Heart left ventricle (tissue), 16 donors: ENCODE measurements at regions of chr13 and their contacts with region 1.

Region 1: DNA sequence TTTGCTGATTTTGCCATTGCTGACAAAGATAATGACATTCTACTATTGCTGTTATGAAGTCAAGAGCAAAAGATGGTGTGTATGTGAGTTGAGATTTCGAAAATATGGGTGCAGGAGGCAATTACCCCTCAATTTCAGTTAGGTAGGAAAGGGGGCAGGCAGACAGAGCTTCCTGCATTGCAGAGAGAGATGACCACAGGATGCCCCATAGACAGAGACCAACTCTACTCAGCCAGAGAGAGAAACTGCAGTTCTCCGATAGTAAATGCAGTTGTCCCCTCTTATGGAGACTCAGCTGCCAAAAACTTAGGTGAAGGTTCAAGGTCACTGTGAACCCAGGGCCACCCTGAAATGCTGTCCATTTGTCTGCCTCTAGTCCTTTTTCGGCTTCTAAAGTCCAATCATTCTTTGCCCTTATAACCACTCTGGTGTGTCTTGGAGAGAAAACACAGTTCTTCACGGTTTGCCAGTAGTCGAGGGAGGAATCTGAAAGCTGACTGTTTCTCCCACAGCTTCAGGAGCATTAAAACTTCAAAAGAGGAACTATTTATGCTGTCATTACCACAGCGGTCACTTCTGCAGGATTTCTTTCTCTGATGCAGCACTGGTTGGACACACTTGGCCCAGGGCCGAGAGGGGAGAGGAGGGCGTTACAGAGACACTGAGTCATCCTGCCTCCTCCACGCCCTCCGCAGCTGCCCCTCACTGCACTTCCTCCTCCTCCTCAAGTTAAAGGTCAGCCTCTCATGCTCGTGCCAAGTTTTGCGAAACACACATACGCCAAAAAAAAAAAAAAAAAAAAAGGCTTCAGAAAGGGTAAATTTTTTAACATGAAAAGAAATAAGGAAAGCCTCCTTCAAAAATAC is 264.3 kb downstream of the FOXO1 start:
- DNase-seq: peak; percentile 92 to 97 (median 97)
- ATAC-seq: peak; percentile 85 to 98 (median 98)
- H3K4me3 ChIP-seq: peak overlapping the region in 6 of 12 donors; percentile 11 to 25 (median 20)
- H3K27ac ChIP-seq: peak overlapping the region; percentile 11 to 76 (median 58)
- H3K4me1 ChIP-seq: peaks cover 4 to 40% (median 28%) of the 10 kb centered on the region in 12 donors
- H3K27me3 ChIP-seq: no peaks in the 10 kb centered on the region
- CTCF ChIP-seq: no peak
- POLR2A ChIP-seq: no peak

Region 2: DNA sequence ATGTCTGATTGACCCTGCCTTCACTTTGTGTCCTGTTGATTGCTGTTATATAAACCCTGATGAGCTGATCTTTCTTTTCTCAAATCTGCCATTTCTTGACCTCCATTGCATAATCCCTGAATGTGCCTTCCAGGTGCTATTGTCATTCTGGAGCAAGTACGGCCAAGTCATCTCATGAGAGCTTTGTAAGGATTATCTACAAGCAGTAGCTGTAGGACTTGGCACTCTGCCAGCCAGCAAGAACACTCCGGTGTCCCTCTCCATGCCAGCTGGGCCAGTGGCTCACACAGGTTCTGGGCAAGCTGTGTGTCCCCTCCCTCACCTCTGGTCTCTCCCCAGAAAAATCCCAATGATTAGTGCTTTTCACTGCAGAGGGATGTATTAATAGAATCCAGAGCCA is 83.8 kb before region 1 on chr13:
- intact Hi-C with region 1: loop called in 1 of 10 experiments (anchors 10 kb)
- DNase-seq: peak; percentile 56 to 81 (median 70)
- ATAC-seq: peak in 3 of 4 donors; percentile 43 to 63 (median 62)
- H3K4me3 ChIP-seq: no peak overlapping the region
- H3K27ac ChIP-seq: no peak overlapping the region
- H3K4me1 ChIP-seq: peaks cover 0 to 27% (median 14%) of the 10 kb centered on the region in 12 donors
- H3K27me3 ChIP-seq: no peaks in the 10 kb centered on the region
- CTCF ChIP-seq: no peak
- POLR2A ChIP-seq: no peak

Region 3: GRCh38 chr13:40464337-40465014 is 62.3 kb after region 1 on chr13:
- intact Hi-C with region 1: no loop called
- DNase-seq: no peak
- ATAC-seq: no peak
- H3K4me3 ChIP-seq: no peak overlapping the region
- H3K27ac ChIP-seq: no peak overlapping the region
- H3K4me1 ChIP-seq: peaks cover 0 to 2% (median 0%) of the 10 kb centered on the region in 12 donors
- H3K27me3 ChIP-seq: no peaks in the 10 kb centered on the region
- CTCF ChIP-seq: no peak
- POLR2A ChIP-seq: no peak

Region 4: DNA sequence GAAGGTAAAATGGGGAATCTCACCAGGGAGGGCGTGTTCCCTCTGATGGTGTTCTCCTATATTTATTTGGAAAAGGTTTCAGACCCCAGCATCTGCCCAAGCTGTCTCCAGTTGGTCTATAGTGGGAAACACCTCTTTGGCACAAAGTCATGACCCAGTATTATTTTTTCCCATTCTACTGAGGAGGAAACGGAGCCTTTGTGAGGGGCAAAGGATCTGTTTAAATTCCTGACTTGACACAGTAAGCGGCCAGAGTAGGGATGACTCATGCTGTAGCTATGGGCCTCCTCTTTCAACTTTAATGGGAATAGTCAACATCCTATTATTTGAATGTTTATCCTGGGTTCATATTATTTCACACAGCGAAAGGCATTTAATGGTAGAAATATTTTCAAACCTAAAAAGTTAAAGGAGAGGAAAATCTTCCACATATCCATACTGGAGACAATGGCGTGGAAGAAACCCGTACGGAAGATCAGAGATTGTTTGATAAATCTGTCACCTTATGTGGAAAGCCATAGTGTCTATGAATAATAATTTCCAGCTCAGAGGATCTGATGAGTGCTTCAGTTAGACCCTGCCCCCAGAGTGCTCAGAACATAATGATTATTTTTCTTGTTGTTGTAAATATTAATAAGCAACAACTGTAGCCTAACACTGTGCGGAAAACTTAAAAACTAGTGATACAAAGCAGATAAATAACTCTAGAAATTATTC is 138.3 kb after region 1 on chr13:
- intact Hi-C with region 1: no loop called
- DNase-seq: no peak
- ATAC-seq: peak in 3 of 4 donors; percentile 74 to 83 (median 82)
- H3K4me3 ChIP-seq: no peak overlapping the region
- H3K27ac ChIP-seq: peak overlapping the region in 5 of 12 donors; percentile 6 to 65 (median 25)
- H3K4me1 ChIP-seq: peaks cover 0 to 19% (median 9%) of the 10 kb centered on the region in 12 donors
- H3K27me3 ChIP-seq: no peaks in the 10 kb centered on the region
- CTCF ChIP-seq: no peak
- POLR2A ChIP-seq: no peak

Region 5: GRCh38 chr13:40589285-40590109 is 187.4 kb after region 1 on chr13:
- intact Hi-C with region 1: loop called in 1 of 10 experiments (anchors 10 kb)
- DNase-seq: peak in 4 of 5 donors; percentile 56 to 68 (median 62)
- ATAC-seq: peak; percentile 71 to 92 (median 87)
- H3K4me3 ChIP-seq: peak overlapping the region in 2 of 12 donors; percentile 0 to 12
- H3K27ac ChIP-seq: peak overlapping the region; percentile 16 to 88 (median 66)
- H3K4me1 ChIP-seq: peaks cover 21 to 99% (median 71%) of the 10 kb centered on the region in 12 donors
- H3K27me3 ChIP-seq: no peaks in the 10 kb centered on the region
- CTCF ChIP-seq: no peak
- POLR2A ChIP-seq: no peak

Region 6: GRCh38 chr13:40764587-40765403 is 362.7 kb after region 1 on chr13:
- intact Hi-C with region 1: no loop called
- DNase-seq: no peak
- ATAC-seq: no peak
- H3K4me3 ChIP-seq: no peak overlapping the region
- H3K27ac ChIP-seq: no peak overlapping the region
- H3K4me1 ChIP-seq: peaks cover 0 to 27% (median 8%) of the 10 kb centered on the region in 12 donors
- H3K27me3 ChIP-seq: no peaks in the 10 kb centered on the region
- CTCF ChIP-seq: no peak
- POLR2A ChIP-seq: no peak